ENCODE measurements at regions of chr14 and their contacts with region 1.

Region 1: DNA sequence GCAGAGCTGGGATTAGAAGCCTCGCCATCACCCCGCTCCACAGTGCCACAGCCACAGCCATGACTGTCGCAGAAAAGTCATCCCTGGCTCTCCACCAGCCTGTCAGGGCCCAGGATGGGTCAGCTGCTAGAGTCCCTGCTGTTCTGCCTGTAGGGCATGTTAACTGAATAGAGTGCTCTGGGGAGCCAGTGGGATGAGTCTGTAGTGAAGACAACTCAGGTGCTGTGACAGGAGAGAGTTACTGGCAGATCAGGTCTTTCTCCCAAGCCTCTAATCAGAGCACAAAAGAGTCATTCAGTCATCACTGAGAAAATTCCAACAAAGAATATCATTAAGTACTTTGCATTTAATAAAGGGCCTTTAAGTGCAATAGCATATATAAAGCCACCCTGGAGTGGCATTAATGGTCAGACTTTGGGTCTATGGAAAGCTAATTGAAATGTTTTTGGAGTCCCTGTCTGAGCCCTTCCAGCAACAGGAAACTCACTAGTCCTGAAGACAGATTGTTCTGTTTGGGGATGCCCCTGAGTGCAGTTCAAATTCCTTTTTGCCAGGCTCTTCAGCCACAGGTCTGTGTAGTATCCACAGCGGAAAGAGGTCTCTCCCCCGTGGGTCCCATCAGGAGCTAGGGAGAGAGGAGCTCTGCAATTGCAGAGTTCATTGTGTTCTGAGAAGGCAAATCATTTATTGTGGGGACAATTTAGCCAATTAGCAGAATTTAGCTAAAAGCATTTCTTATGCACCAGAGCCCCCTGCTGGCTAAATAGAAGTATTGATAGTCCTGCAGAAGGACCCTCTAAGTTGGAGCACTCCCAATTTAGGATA is 45.2 kb upstream of the C14orf132 start:
- DNase-seq: peak; percentile 72
- ATAC-seq: no peak
- H3K4me3 ChIP-seq: no peak overlapping the region
- H3K4me3 Mint-ChIP-seq: no peak overlapping the region
- H3K27ac ChIP-seq: no peak overlapping the region
- H3K27ac Mint-ChIP-seq: no peak overlapping the region
- H3K4me1 ChIP-seq: peaks cover 3% of the 10 kb centered on the region in 2 donors
- H3K4me1 Mint-ChIP-seq: no peaks in the 10 kb centered on the region
- H3K27me3 ChIP-seq: peaks cover 0 to 24% (median 13%) of the 10 kb centered on the region in 4 experiments
- H3K27me3 Mint-ChIP-seq: peaks cover 42% of the 10 kb centered on the region
- CTCF ChIP-seq: peak; percentile 95

Region 2: GRCh38 chr14:94689218-94689984 is 1304.6 kb before region 1 on chr14:
- CTCF ChIA-PET with region 1: no interaction called
- POLR2A ChIA-PET with region 1: no interaction called
- intact Hi-C with region 1: loop called (anchors 5 kb)
- DNase-seq: peak; percentile 26
- ATAC-seq: peak; percentile 47
- H3K4me3 ChIP-seq: no peak overlapping the region
- H3K4me3 Mint-ChIP-seq: no peak overlapping the region
- H3K27ac ChIP-seq: no peak overlapping the region
- H3K27ac Mint-ChIP-seq: no peak overlapping the region
- H3K4me1 ChIP-seq: no peaks in the 10 kb centered on the region
- H3K4me1 Mint-ChIP-seq: no peaks in the 10 kb centered on the region
- H3K27me3 ChIP-seq: peaks cover 0 to 2% (median 0%) of the 10 kb centered on the region in 4 experiments
- H3K27me3 Mint-ChIP-seq: peaks cover 6% of the 10 kb centered on the region
- CTCF ChIP-seq: peak; percentile 73

Region 3: DNA sequence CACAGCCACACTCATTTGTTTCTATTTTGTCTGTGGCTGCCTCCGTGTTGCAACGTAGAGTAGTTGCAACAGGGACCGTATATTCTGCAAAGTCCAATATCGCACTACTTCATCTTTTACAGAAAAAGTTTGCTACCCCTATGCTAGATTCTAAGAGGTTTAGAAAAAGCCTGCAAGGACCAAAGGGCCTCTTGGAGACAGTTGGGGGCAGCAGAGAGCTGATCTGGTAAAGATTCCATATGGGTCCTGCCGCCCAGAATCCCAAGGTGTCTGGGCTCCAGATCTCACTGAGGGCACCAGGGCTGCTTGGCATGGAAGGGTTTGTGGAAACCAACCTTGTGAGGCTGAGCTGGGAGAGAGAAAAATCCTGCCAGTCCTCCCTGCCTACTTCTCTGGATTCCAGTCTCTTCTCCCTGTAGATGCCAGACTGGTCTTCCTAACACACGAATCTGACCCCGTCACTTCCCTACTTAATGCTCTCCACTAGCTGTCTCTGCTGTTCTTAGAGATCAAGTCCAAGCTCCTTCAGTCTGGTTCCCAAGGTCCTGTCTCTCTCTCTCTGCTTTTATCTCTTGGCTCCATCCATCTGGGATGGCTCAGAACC is 384.5 kb before region 1 on chr14:
- CTCF ChIA-PET with region 1: interaction called, 40 read pairs
- POLR2A ChIA-PET with region 1: no interaction called
- intact Hi-C with region 1: loop called (anchors 1 kb)
- DNase-seq: peak; percentile 52
- ATAC-seq: no peak
- H3K4me3 ChIP-seq: no peak overlapping the region
- H3K4me3 Mint-ChIP-seq: no peak overlapping the region
- H3K27ac ChIP-seq: no peak overlapping the region
- H3K27ac Mint-ChIP-seq: no peak overlapping the region
- H3K4me1 ChIP-seq: peaks cover 13 to 29% of the 10 kb centered on the region in 2 donors
- H3K4me1 Mint-ChIP-seq: peaks cover 31% of the 10 kb centered on the region
- H3K27me3 ChIP-seq: peaks cover 0 to 10% (median 3%) of the 10 kb centered on the region in 4 experiments
- H3K27me3 Mint-ChIP-seq: peaks cover 45% of the 10 kb centered on the region
- CTCF ChIP-seq: peak; percentile 51

Region 4: GRCh38 chr14:95981965-95982719 is 11.8 kb before region 1 on chr14:
- CTCF ChIA-PET with region 1: interaction called, 25 read pairs
- POLR2A ChIA-PET with region 1: no interaction called
- intact Hi-C with region 1: no loop called
- DNase-seq: no peak
- ATAC-seq: no peak
- H3K4me3 ChIP-seq: no peak overlapping the region
- H3K4me3 Mint-ChIP-seq: no peak overlapping the region
- H3K27ac ChIP-seq: no peak overlapping the region
- H3K27ac Mint-ChIP-seq: no peak overlapping the region
- H3K4me1 ChIP-seq: no peaks in the 10 kb centered on the region
- H3K4me1 Mint-ChIP-seq: no peaks in the 10 kb centered on the region
- H3K27me3 ChIP-seq: peaks cover 0 to 30% (median 3%) of the 10 kb centered on the region in 4 experiments
- H3K27me3 Mint-ChIP-seq: peaks cover 49% of the 10 kb centered on the region
- CTCF ChIP-seq: no peak

Region 5: DNA sequence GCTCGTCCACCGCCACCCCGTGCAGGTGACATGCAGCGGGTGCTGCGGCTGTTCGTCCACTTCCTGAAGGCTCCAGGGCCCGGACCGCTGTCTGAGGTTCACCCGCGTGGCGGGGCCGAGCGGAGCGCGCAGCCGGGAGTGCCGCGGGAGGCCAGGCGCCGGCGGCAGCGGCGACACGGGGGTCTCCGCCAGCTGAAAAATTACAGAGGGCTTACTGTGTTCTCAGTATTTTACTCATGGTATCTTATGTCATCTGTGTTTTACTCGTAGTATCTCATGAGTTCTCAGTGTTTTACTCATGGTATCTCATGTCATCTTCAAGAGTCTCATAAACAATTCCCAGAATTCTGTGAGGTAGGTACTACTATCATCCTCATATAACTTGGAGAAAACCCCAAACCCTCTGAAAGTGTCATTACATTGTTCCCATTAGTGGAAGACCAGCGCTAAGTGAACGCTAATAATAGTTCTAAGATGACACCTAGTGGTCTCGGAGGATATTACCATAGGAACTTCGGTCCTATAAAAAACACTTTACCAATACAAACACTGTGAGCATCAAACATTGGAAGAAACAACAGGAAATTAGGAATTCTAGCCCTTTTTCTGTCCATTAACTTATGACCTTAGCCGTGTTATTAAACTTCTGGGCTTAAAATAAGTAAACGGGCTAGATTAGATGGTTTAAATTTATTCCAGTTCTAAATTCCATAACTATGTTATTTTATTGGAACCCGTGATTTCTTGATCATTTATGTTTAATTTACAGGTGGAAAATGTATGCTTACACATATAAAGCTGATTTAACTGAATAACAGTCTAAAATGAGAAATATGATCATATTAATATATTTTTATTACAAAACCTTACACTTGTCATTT is 430.4 kb after region 1 on chr14:
- CTCF ChIA-PET with region 1: interaction called, 4 read pairs
- POLR2A ChIA-PET with region 1: no interaction called
- intact Hi-C with region 1: loop called (anchors 10 kb)
- DNase-seq: peak; percentile 80
- ATAC-seq: peak; percentile 86
- H3K4me3 ChIP-seq: peak overlapping the region; percentile 14 to 57 (median 53)
- H3K4me3 Mint-ChIP-seq: peak overlapping the region; percentile 91
- H3K27ac ChIP-seq: no peak overlapping the region
- H3K27ac Mint-ChIP-seq: no peak overlapping the region
- H3K4me1 ChIP-seq: peaks cover 12 to 14% of the 10 kb centered on the region in 2 donors
- H3K4me1 Mint-ChIP-seq: peaks cover 23% of the 10 kb centered on the region
- H3K27me3 ChIP-seq: no peaks in the 10 kb centered on the region
- H3K27me3 Mint-ChIP-seq: peaks cover 4% of the 10 kb centered on the region
- CTCF ChIP-seq: peak; percentile 99